BJ (cell line): ENCODE measurements at regions of chr4 and their contacts with region 1.

Region 1: DNA sequence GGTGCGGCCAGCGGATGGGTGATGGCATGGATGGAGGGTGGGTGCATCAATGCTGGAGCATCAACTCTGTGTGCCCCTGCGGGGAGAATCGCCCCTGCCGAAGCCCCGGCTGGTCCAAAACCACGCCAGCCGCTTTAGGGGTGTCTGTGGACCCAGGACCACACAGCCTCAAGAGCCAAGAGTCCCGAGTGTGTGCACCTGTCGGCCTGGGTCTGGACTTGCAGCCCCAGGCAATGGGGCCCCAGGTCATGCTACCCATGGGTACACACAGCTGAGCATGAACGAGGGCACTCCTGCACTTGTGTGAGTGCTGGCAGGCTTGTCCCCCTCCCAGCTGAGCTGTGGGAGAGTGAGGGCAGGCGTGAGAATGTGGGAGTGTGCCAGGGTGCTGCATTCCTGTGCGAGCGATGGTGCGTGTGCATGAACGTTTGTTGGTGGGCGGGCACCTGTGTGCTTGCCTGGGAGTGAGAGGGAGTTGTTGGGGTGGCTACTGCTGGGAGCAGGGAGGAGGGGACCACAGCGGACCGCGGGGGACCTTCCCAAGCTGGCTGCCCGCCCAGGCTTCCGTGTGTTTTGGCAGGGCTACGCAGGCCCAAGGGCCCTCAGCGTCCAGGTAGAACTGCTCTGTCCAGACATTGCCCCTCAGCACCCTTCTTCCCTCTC is 30.8 kb downstream of the BLOC1S4 start:
- DNase-seq: no peak
- H3K4me3 ChIP-seq: no peak overlapping the region
- H3K27me3 ChIP-seq: no peaks in the 10 kb centered on the region; the same call in 1 of the 2 replicates
- CTCF ChIP-seq: no peak

Region 2: DNA sequence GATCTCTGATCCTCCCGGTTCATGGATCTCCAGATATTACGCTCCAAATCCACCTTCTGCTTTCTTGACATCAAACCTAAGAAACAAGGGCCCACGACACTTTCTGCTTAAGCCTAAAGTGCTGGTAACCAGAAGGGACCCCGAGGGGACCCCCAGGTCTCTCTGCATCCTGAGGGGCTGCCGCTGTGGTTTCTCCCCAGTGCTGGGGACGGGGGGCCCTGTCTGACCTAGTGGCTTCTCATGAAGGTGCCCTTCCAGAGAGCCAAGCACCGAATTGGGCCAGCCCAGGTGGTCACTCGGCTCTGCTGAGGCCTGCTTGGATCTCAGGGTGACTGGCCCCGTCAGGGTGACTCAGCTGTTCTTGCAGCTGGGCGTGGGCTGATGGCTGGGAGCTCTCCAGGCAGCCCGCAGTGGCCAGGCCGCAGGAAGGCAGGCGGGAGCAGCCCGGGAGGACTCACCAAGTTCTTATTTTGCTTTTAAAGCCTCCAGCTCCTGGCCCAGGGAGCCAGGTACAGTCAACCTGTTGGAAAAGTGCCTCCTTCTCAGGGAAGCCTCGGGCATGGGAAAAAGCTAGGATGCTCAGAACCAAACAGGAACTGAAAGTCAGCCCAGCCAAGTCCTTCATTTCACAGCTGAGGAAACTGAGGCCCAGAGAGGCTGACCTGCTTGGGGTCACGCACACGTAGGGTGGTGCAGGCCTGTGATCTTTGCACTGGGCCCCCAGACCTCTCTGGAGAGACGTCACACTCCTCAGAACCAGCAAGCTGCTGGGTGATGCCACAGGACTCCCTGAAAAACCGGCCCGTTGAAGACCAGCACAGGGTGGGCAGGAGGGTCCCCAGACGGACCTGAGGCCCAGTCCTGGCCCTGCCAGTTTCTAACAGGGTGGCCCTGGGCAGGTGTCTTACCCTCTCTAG is 14.1 kb before region 1 on chr4:
- CTCF ChIA-PET with region 1: interaction called, 3 read pairs
- POLR2A ChIA-PET with region 1: interaction called, 12 read pairs
- DNase-seq: peak; percentile 50
- H3K4me3 ChIP-seq: no peak overlapping the region
- H3K27me3 ChIP-seq: no peaks in the 10 kb centered on the region
- CTCF ChIP-seq: 0 out of 2 replicates have a peak, but pooled peaks have one; percentile 10